ENCODE measurements at regions of chr2 and their contacts with region 1.

Region 1: DNA sequence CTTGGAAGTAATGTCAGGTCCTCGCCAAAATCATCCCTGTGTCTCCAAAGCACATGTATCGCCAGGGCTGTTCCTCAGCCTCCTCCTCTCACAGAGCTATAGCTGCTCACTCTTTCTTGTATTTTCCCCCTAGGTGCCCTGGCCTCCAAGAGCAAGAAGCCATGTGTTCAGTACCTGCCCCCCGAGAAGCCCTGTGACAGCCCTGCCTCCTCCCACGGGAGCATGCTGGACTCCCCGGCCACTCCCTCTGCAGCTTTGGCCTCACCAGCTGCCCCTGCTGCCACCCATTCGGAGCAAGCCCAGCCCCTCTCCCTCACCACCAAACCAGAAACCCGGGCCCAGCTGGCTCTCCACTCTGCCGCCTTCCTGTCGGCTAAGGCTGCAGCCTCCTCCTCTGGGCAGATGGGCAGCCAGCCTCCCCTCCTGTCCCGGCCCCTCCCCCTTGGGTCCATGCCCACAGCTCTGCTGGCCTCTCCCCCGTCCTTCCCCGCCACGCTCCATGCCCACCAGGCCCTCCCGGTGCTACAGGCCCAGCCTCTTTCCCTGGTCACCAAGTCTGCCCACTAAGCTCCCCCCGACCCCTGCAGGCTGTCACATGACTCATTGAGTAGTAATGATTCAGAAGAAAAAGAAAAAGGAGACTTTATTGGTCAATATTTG is 18.8 kb downstream of the TGOLN2 start:
- DNase-seq: peak; percentile 76
- ATAC-seq: peak; percentile 19

Region 2: DNA sequence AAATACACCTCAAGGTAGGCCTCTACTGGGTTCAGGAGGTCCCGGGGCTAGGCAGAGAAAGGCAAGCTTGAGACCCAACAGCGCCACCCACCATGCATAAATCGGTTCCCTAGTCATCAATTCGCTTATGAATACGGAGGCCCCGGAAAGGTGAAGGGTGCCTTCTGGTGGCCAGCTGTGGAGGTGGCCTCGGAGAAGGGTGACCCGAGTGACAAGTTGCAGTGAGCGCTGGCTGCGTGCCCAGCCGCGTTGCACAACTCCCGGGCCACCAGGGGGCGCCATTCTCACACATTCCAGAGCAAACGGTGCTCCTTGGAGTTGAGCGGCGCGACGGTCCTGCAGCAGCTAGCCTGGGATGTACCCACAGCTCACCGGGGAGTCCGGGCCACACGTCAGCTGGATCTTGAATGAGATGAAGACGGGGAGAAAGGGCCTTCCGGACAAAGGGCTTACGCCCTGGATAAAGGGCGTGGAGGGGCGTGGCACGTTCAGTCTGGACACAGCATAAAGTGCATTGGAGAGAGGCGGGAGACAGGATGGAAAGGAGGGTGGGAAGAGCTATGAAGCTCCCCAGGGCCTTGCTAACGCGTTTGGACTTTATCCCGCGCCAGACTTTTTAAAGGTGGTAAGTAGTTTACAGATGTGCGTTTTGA is 383.2 kb before region 1 on chr2:
- intact Hi-C with region 1: loop called (anchors 10 kb)
- DNase-seq: peak; percentile 98
- ATAC-seq: peak; percentile 95

Region 3: DNA sequence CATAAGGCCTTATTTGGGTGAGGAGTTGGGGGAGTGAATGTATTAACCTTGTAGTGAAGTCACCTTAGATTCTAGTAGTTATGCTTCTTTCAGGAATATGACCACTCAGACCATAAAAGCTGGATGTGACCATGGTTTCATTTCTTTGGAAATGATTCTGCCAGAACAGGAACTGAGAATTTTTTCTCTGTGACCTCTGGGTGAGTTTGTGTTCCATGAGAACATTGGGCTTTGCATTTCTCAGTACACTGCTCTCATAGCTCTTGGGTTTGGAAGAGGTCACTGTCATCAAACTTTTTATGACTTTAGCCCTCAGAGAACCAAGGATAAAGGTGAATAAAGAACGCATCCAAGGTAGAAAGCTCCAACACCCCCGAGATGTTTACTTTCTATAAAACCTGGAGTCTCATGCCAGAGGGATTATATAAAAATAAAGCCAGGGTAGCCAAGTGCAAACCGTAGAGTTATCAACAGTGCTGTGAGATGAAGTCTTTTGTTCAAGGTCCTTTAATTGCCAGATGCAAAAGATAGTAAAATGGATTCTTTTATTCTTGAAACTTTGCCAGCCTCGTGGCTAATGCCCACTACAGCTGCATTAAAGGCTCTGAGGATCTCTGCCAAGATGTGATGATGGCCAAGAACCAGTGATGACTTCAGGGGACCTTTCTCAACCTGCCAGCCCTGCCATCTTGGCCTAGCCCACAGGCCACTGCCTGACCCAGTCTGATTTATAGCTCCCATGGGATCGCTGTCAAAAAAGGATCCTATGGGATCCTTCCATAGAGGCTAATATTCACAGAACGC is 202.2 kb after region 1 on chr2:
- intact Hi-C with region 1: no loop called
- DNase-seq: no peak
- ATAC-seq: peak; percentile 39